OCI-LY7 (cell line): ENCODE measurements at regions of chr10 and their contacts with region 1.

Region 1: GRCh38 chr10:50607356-50607925 is 16.3 kb downstream of the SGMS1 start:
- DNase-seq: no peak
- H3K4me3 ChIP-seq: no peak overlapping the region
- H3K27ac ChIP-seq: no peak overlapping the region
- H3K4me1 ChIP-seq: peaks cover 53% of the 10 kb centered on the region
- CTCF ChIP-seq: no peak

Region 2: GRCh38 chr10:50322077-50322476 is 285.4 kb before region 1 on chr10:
- CTCF ChIA-PET with region 1: no interaction called
- POLR2A ChIA-PET with region 1: no interaction called
- intact Hi-C with region 1: no loop called
- DNase-seq: no peak
- H3K4me3 ChIP-seq: no peak overlapping the region
- H3K27ac ChIP-seq: no peak overlapping the region
- H3K4me1 ChIP-seq: peaks cover 9% of the 10 kb centered on the region
- CTCF ChIP-seq: no peak

Region 3: DNA sequence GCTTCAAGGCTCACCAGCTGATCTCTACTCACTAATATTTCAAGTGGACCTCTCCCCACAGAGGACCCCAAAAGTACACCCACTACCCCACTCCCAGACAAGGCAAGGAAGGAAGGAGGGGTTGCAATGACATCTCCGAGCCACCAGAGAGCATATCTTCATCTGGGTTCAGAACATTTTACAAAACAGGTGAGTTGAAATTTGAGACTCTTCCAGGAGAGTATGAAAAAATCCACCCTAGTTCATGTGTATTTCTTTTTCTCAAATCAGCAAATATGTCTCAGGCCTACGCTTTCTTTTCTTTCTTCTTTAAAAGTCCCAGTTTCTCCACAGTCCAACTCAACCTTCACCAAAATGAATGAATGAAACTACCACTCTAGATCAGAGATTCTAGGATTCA is 45.6 kb before region 1 on chr10:
- CTCF ChIA-PET with region 1: no interaction called
- POLR2A ChIA-PET with region 1: no interaction called
- intact Hi-C with region 1: loop called (anchors 1 kb)
- DNase-seq: peak; percentile 54
- H3K4me3 ChIP-seq: no peak overlapping the region
- H3K27ac ChIP-seq: no peak overlapping the region
- H3K4me1 ChIP-seq: peaks cover 11% of the 10 kb centered on the region
- CTCF ChIP-seq: peak; percentile 94

Region 4: GRCh38 chr10:50896721-50897120 is 289.3 kb after region 1 on chr10:
- CTCF ChIA-PET with region 1: no interaction called
- POLR2A ChIA-PET with region 1: no interaction called
- intact Hi-C with region 1: no loop called
- DNase-seq: no peak
- H3K4me3 ChIP-seq: no peak overlapping the region
- H3K27ac ChIP-seq: no peak overlapping the region
- H3K4me1 ChIP-seq: no peaks in the 10 kb centered on the region
- CTCF ChIP-seq: no peak

Region 5: GRCh38 chr10:50917486-50917885 is 310.0 kb after region 1 on chr10:
- CTCF ChIA-PET with region 1: no interaction called
- POLR2A ChIA-PET with region 1: no interaction called
- intact Hi-C with region 1: no loop called
- DNase-seq: no peak
- H3K4me3 ChIP-seq: no peak overlapping the region
- H3K27ac ChIP-seq: no peak overlapping the region
- H3K4me1 ChIP-seq: no peaks in the 10 kb centered on the region
- CTCF ChIP-seq: no peak